ENCODE measurements at regions of chr11 and their contacts with region 1.

Region 1: DNA sequence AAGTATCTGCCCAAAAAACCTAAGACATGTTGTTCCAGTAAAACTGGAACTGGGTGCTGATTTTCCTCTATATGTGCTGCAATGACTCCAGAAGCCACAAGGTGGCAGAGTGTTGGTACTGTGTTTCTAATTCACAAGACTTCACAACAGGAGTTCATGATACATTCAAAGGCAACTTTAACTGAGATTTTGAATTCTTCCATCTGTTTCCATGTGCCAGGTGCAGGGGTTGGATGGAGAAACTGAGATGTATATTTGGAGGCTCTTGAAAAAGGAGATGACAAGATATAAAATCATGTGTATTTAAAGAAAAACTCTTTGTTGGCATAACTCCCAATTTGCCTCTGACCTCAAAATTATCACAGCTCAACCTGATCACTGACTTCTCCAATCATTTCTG is 1098.6 kb upstream of the CCDC90B start:
- DNase-seq: peak; percentile 51
- H3K4me3 Mint-ChIP-seq: no peak overlapping the region
- H3K27ac Mint-ChIP-seq: no peak overlapping the region
- H3K4me1 Mint-ChIP-seq: no peaks in the 10 kb centered on the region
- H3K27me3 Mint-ChIP-seq: no peaks in the 10 kb centered on the region

Region 2: GRCh38 chr11:83836883-83837654 is 547.7 kb before region 1 on chr11:
- CTCF ChIA-PET with region 1: no interaction called
- intact Hi-C with region 1: loop called (anchors 5 kb)
- DNase-seq: peak; percentile 40
- H3K4me3 Mint-ChIP-seq: no peak overlapping the region
- H3K27ac Mint-ChIP-seq: no peak overlapping the region
- H3K4me1 Mint-ChIP-seq: no peaks in the 10 kb centered on the region
- H3K27me3 Mint-ChIP-seq: no peaks in the 10 kb centered on the region

Region 3: DNA sequence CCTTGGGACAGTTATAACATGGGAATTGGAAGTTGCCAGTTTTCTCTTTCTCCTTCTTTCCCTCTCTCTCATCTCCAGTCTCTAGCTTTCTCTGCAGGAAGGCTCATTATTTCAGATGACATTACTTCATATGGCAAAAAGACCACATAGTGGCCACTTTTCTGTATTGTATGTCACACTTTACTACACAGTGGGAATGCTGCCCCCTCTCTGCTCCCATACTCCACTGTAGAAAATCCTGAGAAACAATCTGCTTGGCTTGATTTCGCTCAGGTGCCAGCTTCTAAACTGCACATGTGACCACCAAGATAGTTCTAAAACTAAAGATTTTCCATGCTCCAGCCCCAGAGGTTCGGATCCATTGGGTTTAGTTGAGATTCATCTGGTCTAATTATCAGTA is 237.9 kb before region 1 on chr11:
- CTCF ChIA-PET with region 1: no interaction called
- intact Hi-C with region 1: no loop called
- DNase-seq: no peak
- H3K4me3 Mint-ChIP-seq: no peak overlapping the region
- H3K27ac Mint-ChIP-seq: no peak overlapping the region
- H3K4me1 Mint-ChIP-seq: no peaks in the 10 kb centered on the region
- H3K27me3 Mint-ChIP-seq: no peaks in the 10 kb centered on the region

Region 4: GRCh38 chr11:84345597-84345996 is 39.1 kb before region 1 on chr11:
- CTCF ChIA-PET with region 1: no interaction called
- intact Hi-C with region 1: no loop called
- DNase-seq: no peak
- H3K4me3 Mint-ChIP-seq: no peak overlapping the region
- H3K27ac Mint-ChIP-seq: no peak overlapping the region
- H3K4me1 Mint-ChIP-seq: no peaks in the 10 kb centered on the region
- H3K27me3 Mint-ChIP-seq: no peaks in the 10 kb centered on the region

Region 5: DNA sequence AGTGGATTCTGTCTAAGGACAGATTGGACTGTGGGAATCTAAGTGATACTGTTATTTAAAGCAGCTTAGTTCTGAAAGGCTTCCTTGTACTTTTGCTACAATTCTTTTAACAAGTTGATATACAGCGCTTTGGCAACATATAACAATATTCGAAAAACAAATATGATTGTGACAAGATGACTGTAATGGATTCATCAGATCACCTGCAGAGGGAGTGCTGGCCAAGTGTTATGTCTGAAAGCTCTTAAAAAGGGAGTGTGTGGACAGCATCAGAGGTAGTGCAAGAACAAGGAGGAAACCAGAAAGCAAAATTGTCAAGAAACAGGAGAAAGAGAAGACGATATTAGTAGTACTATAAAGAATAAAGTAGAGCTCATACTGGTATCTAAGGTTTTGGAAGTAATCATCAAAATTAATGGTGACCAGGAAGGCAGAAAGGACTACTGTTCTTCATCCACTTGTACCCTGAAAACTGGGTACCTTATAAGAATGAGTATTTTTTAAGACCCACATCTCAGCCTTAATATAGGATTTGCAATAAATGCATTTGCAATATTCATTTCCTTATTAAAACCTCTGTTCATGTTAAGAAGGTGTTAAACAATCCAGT is 13.4 kb after region 1 on chr11:
- CTCF ChIA-PET with region 1: no interaction called
- intact Hi-C with region 1: no loop called
- DNase-seq: no peak
- H3K4me3 Mint-ChIP-seq: no peak overlapping the region
- H3K27ac Mint-ChIP-seq: no peak overlapping the region
- H3K4me1 Mint-ChIP-seq: no peaks in the 10 kb centered on the region
- H3K27me3 Mint-ChIP-seq: no peaks in the 10 kb centered on the region

Measured in activated naive CD4-positive, alpha-beta T cell treated with anti-CD3 and anti-CD28 coated beads for 36 hours (primary cell).